Activated B cell treated with CpG ODN at 0.5 μM for 24 hours (primary cell): ENCODE measurements at regions of chr20 and their contacts with region 1.

Region 1: GRCh38 chr20:44609511-44610312 is 27.3 kb downstream of the PKIG start:
- DNase-seq: peak; percentile 79
- ATAC-seq: peak; percentile 95
- H3K4me3 Mint-ChIP-seq: peak overlapping the region; percentile 70
- H3K27ac Mint-ChIP-seq: peak overlapping the region; percentile 93
- H3K4me1 Mint-ChIP-seq: peaks cover 62% of the 10 kb centered on the region
- H3K27me3 Mint-ChIP-seq: no peaks in the 10 kb centered on the region
- CTCF ChIP-seq: peak; percentile 92

Region 2: GRCh38 chr20:44217342-44218092 is 392.2 kb before region 1 on chr20:
- CTCF ChIA-PET with region 1: interaction called, 5 read pairs
- POLR2A ChIA-PET with region 1: no interaction called
- intact Hi-C with region 1: loop called (anchors 1 kb)
- DNase-seq: peak; percentile 34
- ATAC-seq: peak; percentile 68
- H3K4me3 Mint-ChIP-seq: peak overlapping the region; percentile 46
- H3K27ac Mint-ChIP-seq: no peak overlapping the region
- H3K4me1 Mint-ChIP-seq: peaks cover 33% of the 10 kb centered on the region
- H3K27me3 Mint-ChIP-seq: no peaks in the 10 kb centered on the region
- CTCF ChIP-seq: peak; percentile 37

Region 3: GRCh38 chr20:44475694-44476560 is 133.8 kb before region 1 on chr20 and contains the start of gene TTPAL:
- CTCF ChIA-PET with region 1: interaction called, 4 read pairs
- POLR2A ChIA-PET with region 1: interaction called, 7 read pairs
- intact Hi-C with region 1: loop called (anchors 1 kb)
- DNase-seq: peak; percentile 93
- ATAC-seq: peak; percentile 91
- H3K4me3 Mint-ChIP-seq: peak within 1 kb of the TSS; percentile 96
- H3K27ac Mint-ChIP-seq: peak within 1 kb of the TSS; percentile 94
- H3K4me1 Mint-ChIP-seq: peaks cover 40% of the 10 kb centered on the region
- H3K27me3 Mint-ChIP-seq: no peaks in the 10 kb centered on the region
- CTCF ChIP-seq: no peak
- total RNA-seq, gene TTPAL: 27.5 and 27.7 TPM in 2 replicates

Region 4: DNA sequence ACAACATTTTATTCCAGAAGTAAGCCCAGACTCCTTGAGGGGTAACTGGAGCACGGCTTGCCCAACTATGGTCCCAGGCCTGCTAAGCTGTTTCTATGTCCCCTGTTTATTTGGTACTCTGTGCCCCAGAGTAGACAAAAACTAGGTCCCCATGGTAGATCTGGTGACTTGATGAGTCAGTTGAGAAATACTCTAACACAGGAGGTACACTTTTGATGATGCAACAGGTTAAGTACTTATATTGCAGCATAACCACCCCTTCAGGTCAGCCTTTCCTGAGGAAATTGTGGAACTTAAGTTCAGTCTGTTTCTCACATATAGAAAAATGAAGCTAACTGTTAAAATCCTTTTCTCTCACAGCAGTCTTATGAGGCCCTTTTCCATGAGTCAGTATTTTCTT is 114.5 kb before region 1 on chr20:
- CTCF ChIA-PET with region 1: no interaction called
- POLR2A ChIA-PET with region 1: no interaction called
- intact Hi-C with region 1: no loop called
- DNase-seq: no peak
- ATAC-seq: no peak
- H3K4me3 Mint-ChIP-seq: no peak overlapping the region
- H3K27ac Mint-ChIP-seq: peak overlapping the region; percentile 64
- H3K4me1 Mint-ChIP-seq: peaks cover 36% of the 10 kb centered on the region
- H3K27me3 Mint-ChIP-seq: no peaks in the 10 kb centered on the region
- CTCF ChIP-seq: no peak

Region 5: DNA sequence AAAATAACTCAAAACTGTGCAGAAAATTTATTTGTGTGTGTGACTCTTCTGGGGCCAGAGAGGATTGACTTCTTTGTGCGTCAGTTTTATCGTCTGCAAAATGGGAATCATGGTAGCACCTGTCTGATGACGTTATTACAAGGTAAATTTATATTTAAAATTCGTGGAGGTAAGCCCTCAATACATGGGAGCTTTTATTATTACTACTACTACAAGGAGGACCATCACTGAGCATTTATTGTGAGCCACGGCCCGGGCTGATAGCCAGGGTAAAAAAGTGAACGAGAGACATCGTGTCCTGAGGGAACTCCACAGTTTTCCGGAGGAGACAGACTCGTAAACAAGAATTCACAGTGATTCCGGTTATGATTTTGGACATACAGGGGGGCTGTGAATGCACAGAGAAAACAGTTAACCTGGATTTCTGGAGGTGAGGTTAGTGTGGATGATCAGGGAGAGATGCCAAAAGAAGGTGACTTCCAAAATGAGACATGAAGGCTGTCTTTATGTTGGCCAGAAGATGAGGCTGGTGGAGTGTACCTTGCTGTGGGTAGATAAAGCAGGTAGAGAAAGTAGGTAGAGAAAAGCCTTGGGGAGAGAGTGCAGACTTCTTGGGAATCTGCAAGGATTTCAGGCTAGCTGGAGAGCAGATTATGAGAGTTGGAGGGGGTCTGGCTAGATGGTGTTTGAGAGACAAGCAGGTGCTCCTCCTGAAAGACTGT is 77.3 kb before region 1 on chr20:
- CTCF ChIA-PET with region 1: interaction called, 4 read pairs
- POLR2A ChIA-PET with region 1: interaction called, 5 read pairs
- intact Hi-C with region 1: loop called (anchors 1 kb)
- DNase-seq: no peak
- ATAC-seq: no peak
- H3K4me3 Mint-ChIP-seq: no peak overlapping the region
- H3K27ac Mint-ChIP-seq: no peak overlapping the region
- H3K4me1 Mint-ChIP-seq: peaks cover 9% of the 10 kb centered on the region
- H3K27me3 Mint-ChIP-seq: no peaks in the 10 kb centered on the region
- CTCF ChIP-seq: no peak

Region 6: GRCh38 chr20:44582311-44583025 is 27.2 kb before region 1 on chr20 and contains the start of gene PKIG:
- CTCF ChIA-PET with region 1: interaction called, 147 read pairs
- POLR2A ChIA-PET with region 1: interaction called, 154 read pairs
- intact Hi-C with region 1: no loop called
- DNase-seq: no peak
- ATAC-seq: no peak
- H3K4me3 Mint-ChIP-seq: peak within 1 kb of the TSS; percentile 94
- H3K27ac Mint-ChIP-seq: peak within 1 kb of the TSS; percentile 96
- H3K4me1 Mint-ChIP-seq: peaks cover 79% of the 10 kb centered on the region
- H3K27me3 Mint-ChIP-seq: no peaks in the 10 kb centered on the region
- CTCF ChIP-seq: no peak
- total RNA-seq, gene PKIG: 181 and 191 TPM in 2 replicates

Region 7: DNA sequence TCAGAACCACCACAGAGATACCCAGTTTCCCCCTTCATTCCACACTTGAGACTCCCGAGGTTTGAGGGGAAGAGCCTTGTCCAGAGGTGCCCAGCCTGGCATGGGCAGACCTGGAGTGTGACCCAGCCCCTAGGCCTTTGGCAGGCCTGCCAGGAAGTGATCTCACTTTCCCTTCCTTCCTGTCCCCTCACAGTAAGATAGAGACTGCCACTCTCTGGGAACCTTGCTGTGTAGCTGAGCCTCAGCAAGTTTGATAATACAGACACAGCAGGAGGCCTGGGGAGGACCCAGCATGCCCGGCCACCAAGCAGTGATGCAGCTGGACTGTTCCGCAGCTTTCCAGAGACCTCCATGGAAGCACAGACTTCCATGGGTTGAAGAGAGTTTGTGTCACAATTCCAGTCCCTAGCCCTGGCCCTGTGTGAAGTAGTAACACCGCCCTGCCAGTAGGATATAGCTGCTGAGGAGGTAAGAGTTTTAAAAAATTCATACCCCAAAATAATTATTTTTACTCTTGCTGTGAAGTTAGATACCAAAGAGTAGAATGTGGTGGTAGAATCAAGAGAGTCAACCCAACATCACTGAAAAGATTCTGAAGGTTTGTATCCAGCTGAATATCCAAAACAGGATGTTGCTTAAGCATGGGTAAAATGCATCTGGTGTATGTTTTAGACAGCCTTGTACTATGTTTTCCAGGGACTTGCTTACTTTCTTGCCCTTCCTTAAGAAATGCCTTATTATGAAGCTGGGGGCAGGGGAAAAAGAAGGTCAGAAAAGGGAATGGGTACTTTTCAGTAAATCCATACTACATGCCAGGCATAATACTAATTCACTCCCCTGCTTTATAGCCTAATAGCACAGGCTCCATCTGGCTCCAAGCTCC is 11.0 kb before region 1 on chr20:
- CTCF ChIA-PET with region 1: interaction called, 17 read pairs
- POLR2A ChIA-PET with region 1: interaction called, 5 read pairs
- intact Hi-C with region 1: loop called (anchors 1 kb)
- DNase-seq: no peak
- ATAC-seq: peak; percentile 32
- H3K4me3 Mint-ChIP-seq: peak overlapping the region; percentile 77
- H3K27ac Mint-ChIP-seq: peak overlapping the region; percentile 87
- H3K4me1 Mint-ChIP-seq: peaks cover 87% of the 10 kb centered on the region
- H3K27me3 Mint-ChIP-seq: no peaks in the 10 kb centered on the region
- CTCF ChIP-seq: no peak

Region 8: GRCh38 chr20:44683263-44684046 is 73.7 kb after region 1 on chr20:
- CTCF ChIA-PET with region 1: interaction called, 13 read pairs
- POLR2A ChIA-PET with region 1: interaction called, 9 read pairs
- intact Hi-C with region 1: no loop called
- DNase-seq: no peak
- ATAC-seq: peak; percentile 37
- H3K4me3 Mint-ChIP-seq: no peak overlapping the region
- H3K27ac Mint-ChIP-seq: no peak overlapping the region
- H3K4me1 Mint-ChIP-seq: peaks cover 2% of the 10 kb centered on the region
- H3K27me3 Mint-ChIP-seq: peaks cover 6% of the 10 kb centered on the region
- CTCF ChIP-seq: no peak